ENCODE measurements at regions of chr4 and their contacts with region 1.

Region 1: GRCh38 chr4:87073199-87074120 is 138.6 kb downstream of the AFF1 start:
- DNase-seq: peak; percentile 2 to 72 (median 47)
- ATAC-seq: peak; percentile 96
- H3K4me3 ChIP-seq: peak overlapping the region; percentile 13 to 26
- H3K4me3 Mint-ChIP-seq: peak overlapping the region; percentile 69
- H3K27ac ChIP-seq: peak overlapping the region in 1 of 2 experiments; percentile 21
- H3K27ac Mint-ChIP-seq: peak overlapping the region; percentile 56
- H3K4me1 ChIP-seq: peaks cover 18% of the 10 kb centered on the region
- H3K4me1 Mint-ChIP-seq: peaks cover 36% of the 10 kb centered on the region
- H3K27me3 ChIP-seq: no peaks in the 10 kb centered on the region
- H3K27me3 Mint-ChIP-seq: no peaks in the 10 kb centered on the region
- CTCF ChIP-seq: no peak

Region 2: GRCh38 chr4:87038837-87039615 is 34.4 kb before region 1 on chr4:
- CTCF ChIA-PET with region 1: no interaction called
- POLR2A ChIA-PET with region 1: no interaction called
- intact Hi-C with region 1: loop called in 1 of 2 experiments (anchors 5 kb)
- DNase-seq: no peak
- ATAC-seq: no peak
- H3K4me3 ChIP-seq: no peak overlapping the region
- H3K4me3 Mint-ChIP-seq: no peak overlapping the region
- H3K27ac ChIP-seq: no peak overlapping the region
- H3K27ac Mint-ChIP-seq: no peak overlapping the region
- H3K4me1 ChIP-seq: peaks cover 10% of the 10 kb centered on the region
- H3K4me1 Mint-ChIP-seq: peaks cover 74% of the 10 kb centered on the region
- H3K27me3 ChIP-seq: no peaks in the 10 kb centered on the region
- H3K27me3 Mint-ChIP-seq: no peaks in the 10 kb centered on the region
- CTCF ChIP-seq: no peak

Region 3: DNA sequence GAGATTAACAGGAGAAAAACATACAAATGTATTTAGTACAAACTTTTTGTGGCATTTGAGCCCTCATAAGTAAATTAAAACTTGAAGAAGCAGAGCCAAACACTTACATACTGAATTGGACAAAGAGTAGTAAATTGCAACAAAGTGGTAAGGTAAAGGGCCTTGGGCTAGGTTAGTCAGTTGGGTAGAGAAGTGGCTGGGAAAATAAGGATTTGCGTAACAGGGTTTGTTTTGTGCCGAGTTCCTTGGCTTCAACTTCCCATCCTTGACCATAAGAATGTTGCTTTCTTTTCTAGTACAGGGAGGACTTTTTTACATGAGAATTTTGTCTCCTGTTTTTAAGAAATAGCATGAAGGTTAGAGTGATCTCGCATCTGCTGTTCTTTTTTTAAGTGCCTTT is 501.5 kb after region 1 on chr4:
- CTCF ChIA-PET with region 1: no interaction called
- POLR2A ChIA-PET with region 1: no interaction called
- intact Hi-C with region 1: no loop called
- DNase-seq: no peak
- ATAC-seq: no peak
- H3K4me3 ChIP-seq: no peak overlapping the region
- H3K4me3 Mint-ChIP-seq: no peak overlapping the region
- H3K27ac ChIP-seq: no peak overlapping the region
- H3K27ac Mint-ChIP-seq: no peak overlapping the region
- H3K4me1 ChIP-seq: no peaks in the 10 kb centered on the region
- H3K4me1 Mint-ChIP-seq: no peaks in the 10 kb centered on the region
- H3K27me3 ChIP-seq: no peaks in the 10 kb centered on the region
- H3K27me3 Mint-ChIP-seq: peaks cover 5% of the 10 kb centered on the region
- CTCF ChIP-seq: no peak

Region 4: DNA sequence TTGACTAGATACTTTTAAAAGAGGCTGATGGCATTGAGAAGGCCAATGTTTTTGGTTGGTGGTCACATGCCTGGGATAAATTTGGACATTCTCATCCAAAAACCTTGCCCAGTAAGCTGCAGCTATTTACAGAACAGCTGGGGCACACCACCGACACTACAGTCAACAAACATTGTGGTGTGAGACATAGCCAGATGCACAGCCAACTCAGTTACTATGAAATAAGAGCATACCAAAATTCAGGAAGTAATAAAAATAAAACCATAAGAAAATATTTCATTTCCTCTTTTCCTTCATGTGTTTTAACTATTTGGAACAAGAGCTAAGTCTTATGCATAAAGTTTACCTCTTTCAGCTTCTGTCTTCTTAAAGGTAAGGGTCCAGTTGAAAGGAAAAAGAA is 1202.1 kb after region 1 on chr4:
- CTCF ChIA-PET with region 1: no interaction called
- POLR2A ChIA-PET with region 1: no interaction called
- intact Hi-C with region 1: no loop called
- DNase-seq: no peak
- ATAC-seq: no peak
- H3K4me3 ChIP-seq: no peak overlapping the region
- H3K4me3 Mint-ChIP-seq: no peak overlapping the region
- H3K27ac ChIP-seq: no peak overlapping the region
- H3K27ac Mint-ChIP-seq: no peak overlapping the region
- H3K4me1 ChIP-seq: peaks cover 49% of the 10 kb centered on the region
- H3K4me1 Mint-ChIP-seq: peaks cover 56% of the 10 kb centered on the region
- H3K27me3 ChIP-seq: no peaks in the 10 kb centered on the region
- H3K27me3 Mint-ChIP-seq: no peaks in the 10 kb centered on the region
- CTCF ChIP-seq: no peak

Region 5: GRCh38 chr4:88858752-88859151 is 1785.3 kb after region 1 on chr4:
- CTCF ChIA-PET with region 1: no interaction called
- POLR2A ChIA-PET with region 1: no interaction called
- intact Hi-C with region 1: no loop called
- DNase-seq: peak in 1 of 9 experiments; percentile 11
- ATAC-seq: no peak
- H3K4me3 ChIP-seq: no peak overlapping the region
- H3K4me3 Mint-ChIP-seq: no peak overlapping the region
- H3K27ac ChIP-seq: no peak overlapping the region
- H3K27ac Mint-ChIP-seq: no peak overlapping the region
- H3K4me1 ChIP-seq: no peaks in the 10 kb centered on the region
- H3K4me1 Mint-ChIP-seq: no peaks in the 10 kb centered on the region
- H3K27me3 ChIP-seq: no peaks in the 10 kb centered on the region
- H3K27me3 Mint-ChIP-seq: peaks cover 3% of the 10 kb centered on the region
- CTCF ChIP-seq: no peak

Measured in CD8-positive, alpha-beta T cell (primary cell).